Dorsolateral prefrontal cortex (tissue), 120 donors: ENCODE measurements at regions of chr3 and their contacts with region 1.

Region 1: GRCh38 chr3:195259475-195260279 is 11.3 kb downstream of the XXYLT1 start:
- DNase-seq: peak; percentile 63 to 86 (median 74)
- H3K4me3 ChIP-seq: peak overlapping the region; percentile 57 to 87 (median 75)
- H3K27ac ChIP-seq: peak overlapping the region in 58 of 59 donors; percentile 38 to 94 (median 85)
- H3K27me3 ChIP-seq: no peaks in the 10 kb centered on the region
- CTCF ChIP-seq: peak in 53 of 56 donors; percentile 6 to 95 (median 68)

Region 2: DNA sequence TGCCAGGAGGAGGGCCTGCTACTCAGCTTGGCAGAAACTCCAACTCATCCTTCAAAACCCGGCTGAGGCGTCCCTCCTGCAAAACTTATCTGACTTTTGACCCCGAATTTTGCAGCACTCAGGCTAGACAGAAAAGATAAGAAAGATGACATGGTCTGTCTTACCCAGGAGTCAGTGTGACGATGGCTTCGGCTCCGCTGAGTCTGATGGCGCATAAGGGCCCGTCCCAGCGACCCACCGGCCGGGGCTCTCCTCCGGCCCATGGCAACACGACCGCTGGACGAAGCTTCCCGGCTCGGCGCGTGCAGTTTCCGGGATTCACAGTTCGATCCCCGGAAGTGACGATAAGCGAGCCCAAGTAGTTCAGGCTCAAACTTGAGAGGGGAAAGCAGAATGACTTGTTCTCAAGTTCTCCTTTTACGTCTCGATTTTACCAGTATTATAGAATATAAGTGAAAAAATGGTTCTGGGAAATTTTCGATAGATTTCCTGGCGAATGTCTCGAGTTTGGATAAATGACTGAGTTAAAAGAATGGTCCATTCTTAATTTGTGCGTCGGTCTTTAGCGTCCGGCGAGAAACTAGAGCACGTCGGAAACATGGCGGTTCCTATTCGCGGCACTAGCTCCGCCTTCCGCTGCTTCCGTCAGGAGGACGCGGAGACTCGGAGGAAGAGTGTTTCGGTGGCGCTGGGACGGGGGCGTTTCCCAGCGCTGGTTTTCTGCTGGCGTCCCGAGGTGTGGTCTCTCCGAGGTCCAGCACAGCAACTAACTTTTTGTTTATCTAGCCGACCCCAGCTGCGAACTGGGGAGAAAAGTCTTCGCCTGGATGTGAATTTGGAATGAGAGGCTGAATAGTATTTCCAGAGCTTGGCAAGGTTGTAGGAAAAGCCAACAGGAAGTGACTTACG is 587.5 kb before region 1 on chr3 and contains the start of gene LSG1:
- intact Hi-C with region 1: loop called in 1 of 2 experiments (anchors 2 kb)
- DNase-seq: peak; percentile 84 to 91 (median 88)
- H3K4me3 ChIP-seq: peak within 1 kb of the TSS; percentile 63 to 100 (median 91)
- H3K27ac ChIP-seq: peak within 1 kb of the TSS; percentile 75 to 99 (median 93)
- H3K27me3 ChIP-seq: peaks cover 0 to 8% (median 0%) of the 10 kb centered on the region in 45 donors
- CTCF ChIP-seq: peak in 36 of 56 donors; percentile 2 to 62 (median 37)
- total RNA-seq, gene LSG1: 19.3 to 41.3 (median 27.1) TPM

Region 3: DNA sequence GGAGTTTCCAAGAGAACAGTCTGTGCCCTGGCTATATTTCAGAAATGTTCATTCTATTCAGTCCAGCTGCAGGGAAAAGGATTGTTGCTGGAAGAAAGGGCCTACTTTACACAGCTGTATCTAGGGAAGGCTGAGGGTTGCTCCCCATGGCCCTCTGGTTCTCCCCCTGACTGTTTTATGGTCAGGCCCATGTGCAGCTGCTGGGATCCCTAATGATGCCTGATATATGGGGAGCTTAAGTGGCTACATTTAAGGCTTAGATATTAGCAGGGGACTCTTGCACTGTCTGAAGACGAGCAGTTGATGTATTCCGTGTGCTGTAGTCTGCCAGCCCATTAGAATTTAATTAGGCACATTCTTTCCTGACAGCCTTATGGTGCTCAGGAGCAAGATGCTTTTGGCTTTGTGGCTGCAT is 502.0 kb before region 1 on chr3:
- intact Hi-C with region 1: loop called (anchors 10 kb)
- DNase-seq: peak in 5 of 10 donors; percentile 43 to 59 (median 45)
- H3K4me3 ChIP-seq: peak overlapping the region in 10 of 59 donors; percentile 2 to 43 (median 20)
- H3K27ac ChIP-seq: peak overlapping the region in 58 of 59 donors; percentile 14 to 97 (median 86)
- H3K27me3 ChIP-seq: peaks cover 0 to 5% (median 0%) of the 10 kb centered on the region in 45 donors
- CTCF ChIP-seq: peak in 1 of 56 donors; percentile 0

Region 4: GRCh38 chr3:195035345-195036190 is 224.1 kb before region 1 on chr3:
- intact Hi-C with region 1: no loop called
- DNase-seq: no peak
- H3K4me3 ChIP-seq: no peak overlapping the region
- H3K27ac ChIP-seq: no peak overlapping the region
- H3K27me3 ChIP-seq: no peaks in the 10 kb centered on the region
- CTCF ChIP-seq: no peak

Region 5: GRCh38 chr3:195133462-195133861 is 126.2 kb before region 1 on chr3:
- intact Hi-C with region 1: loop called in 1 of 2 experiments (anchors 5 kb)
- DNase-seq: peak in 9 of 10 donors; percentile 39 to 85 (median 72)
- H3K4me3 ChIP-seq: no peak overlapping the region
- H3K27ac ChIP-seq: peak overlapping the region in 2 of 59 donors; percentile 13
- H3K27me3 ChIP-seq: no peaks in the 10 kb centered on the region
- CTCF ChIP-seq: peak in 26 of 56 donors; percentile 9 to 65 (median 32)